ENCODE measurements at regions of chr17 and their contacts with region 1.

Region 1: DNA sequence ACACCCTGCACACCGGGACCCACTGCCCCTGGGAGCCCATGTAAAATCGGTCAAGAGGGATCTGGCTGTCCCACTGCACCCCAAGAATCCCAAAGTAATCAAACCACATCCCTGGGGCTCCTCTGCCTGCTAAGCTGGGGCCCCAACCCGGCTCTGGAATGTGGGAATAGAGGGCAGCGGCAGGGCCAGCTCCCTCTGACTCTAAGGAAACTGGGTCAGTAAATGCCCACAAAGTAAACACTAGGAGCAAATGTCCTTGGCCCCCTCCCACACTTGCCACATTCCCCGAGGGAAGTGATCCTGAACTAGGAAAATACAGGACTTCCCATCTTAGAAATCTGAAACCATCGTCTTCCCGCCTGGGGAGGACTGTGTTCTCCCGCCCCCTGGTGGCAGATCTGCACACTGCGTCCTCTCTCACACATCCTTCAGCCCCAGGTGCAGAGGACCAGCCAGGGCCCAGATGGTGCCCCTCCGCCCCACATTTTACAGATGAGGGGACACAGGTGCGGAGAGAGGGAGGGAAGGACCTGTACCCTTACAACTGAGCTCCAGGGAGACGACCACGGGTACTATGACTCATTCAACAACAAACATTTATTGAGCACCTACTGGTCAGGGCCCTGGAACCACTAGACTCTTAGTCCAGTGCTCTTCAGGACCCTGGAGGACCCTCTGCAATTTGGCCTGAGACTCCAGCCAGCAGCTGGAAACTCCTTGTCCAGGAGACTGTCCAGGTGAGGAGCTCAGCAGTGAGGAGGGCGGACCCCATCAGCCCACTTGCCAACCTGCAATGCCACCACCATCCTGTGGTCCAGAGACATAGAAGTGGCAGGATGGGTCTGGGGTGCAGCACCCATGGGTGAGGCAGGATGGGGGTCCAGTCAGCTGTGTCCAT is 10.1 kb downstream of the P3H4 start:
- DNase-seq: peak; percentile 87
- CTCF ChIP-seq: peak; percentile 94

Region 2: DNA sequence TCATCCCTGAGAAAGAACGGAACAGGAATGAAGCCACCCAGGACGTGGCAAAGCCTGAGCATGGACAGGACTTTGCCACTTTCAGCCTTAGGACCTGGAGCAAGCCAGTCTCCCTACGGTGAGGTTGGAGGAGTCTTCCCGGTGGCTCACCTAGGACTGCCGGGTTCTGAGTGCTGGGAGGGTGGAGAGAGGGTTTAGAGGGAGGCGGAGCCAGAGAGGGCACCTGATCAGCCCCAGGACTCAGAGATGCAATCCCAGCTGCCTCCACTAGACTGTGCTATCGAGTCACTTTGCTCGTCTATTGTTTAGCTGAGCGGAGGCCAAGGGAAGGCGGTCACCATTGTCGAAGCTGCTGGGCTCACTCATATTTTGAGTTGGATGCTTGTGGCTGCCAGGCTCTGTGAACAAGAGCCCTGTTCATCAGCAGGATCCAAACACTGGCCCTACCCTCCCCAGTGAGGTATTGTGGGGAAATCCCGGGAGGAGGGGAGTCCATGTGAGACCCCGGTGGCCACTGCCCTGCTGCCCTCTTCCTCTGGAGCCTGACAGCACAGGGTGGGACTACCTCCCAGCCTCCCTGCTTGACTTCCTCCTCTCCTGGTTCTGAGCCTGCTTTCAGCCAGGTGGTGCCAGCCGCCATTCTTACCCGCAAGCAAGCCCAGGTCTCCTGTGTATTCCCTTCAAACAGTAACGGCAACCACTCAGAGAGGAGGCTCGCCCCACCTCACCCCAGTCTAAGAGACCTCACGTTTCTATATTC is 222.0 kb before region 1 on chr17:
- CTCF ChIA-PET with region 1: no interaction called
- POLR2A ChIA-PET with region 1: no interaction called
- DNase-seq: peak; percentile 87
- CTCF ChIP-seq: peak; percentile 48

Region 3: GRCh38 chr17:41738077-41738735 is 63.4 kb before region 1 on chr17:
- CTCF ChIA-PET with region 1: interaction called, 53 read pairs
- POLR2A ChIA-PET with region 1: no interaction called
- DNase-seq: peak; percentile 93
- CTCF ChIP-seq: peak; percentile 99

Region 4: GRCh38 chr17:41786227-41787020 is 15.2 kb before region 1 on chr17 and contains the start of gene JUP:
- CTCF ChIA-PET with region 1: interaction called, 42 read pairs
- POLR2A ChIA-PET with region 1: no interaction called
- DNase-seq: peak; percentile 95
- CTCF ChIP-seq: peak; percentile 46

Region 5: GRCh38 chr17:41811549-41812380 is 10.1 kb after region 1 on chr17 and contains the start of gene P3H4:
- CTCF ChIA-PET with region 1: interaction called, 21 read pairs
- POLR2A ChIA-PET with region 1: no interaction called
- DNase-seq: peak; percentile 85
- CTCF ChIP-seq: peak; percentile 76

Region 6: DNA sequence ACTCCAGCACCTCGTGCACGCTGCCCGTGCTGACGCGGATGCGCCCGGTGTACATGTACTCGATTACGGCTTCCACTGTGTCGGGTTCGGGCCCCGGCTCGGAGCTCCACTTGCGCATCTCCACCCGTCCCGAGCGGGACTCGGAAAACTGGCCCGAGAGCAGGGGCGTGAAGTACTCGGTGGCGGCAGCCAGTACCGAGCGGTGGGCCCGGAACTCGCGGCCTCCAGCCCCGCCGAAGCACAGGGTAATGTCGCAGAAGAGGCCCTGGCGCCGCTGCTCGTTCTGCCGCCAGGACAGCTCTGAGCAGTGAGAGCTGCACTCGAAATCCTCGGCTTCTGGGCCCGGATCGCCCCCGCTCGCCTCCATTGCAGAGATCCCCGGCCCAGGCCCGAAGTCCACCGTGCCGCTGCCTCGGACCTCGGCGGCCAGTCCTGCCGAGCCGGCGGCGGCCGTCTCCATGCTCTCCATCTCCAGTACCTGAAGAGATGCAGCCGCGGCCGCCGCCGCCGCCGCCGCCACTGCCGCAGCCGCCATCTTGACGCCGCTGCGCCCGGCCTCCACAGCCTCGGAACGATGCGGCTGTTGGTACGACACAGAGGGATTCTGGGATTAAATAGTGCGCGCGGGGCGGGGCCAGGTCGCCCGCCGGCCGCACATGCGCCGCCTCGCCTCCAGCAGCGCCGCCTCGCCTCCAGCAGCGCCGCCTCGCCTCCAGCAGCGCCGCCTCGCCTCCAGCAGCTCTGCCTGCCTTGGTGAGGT is 63.4 kb after region 1 on chr17 and contains the start of gene KLHL11:
- CTCF ChIA-PET with region 1: no interaction called
- POLR2A ChIA-PET with region 1: no interaction called
- DNase-seq: peak; percentile 94
- CTCF ChIP-seq: no peak

Region 7: DNA sequence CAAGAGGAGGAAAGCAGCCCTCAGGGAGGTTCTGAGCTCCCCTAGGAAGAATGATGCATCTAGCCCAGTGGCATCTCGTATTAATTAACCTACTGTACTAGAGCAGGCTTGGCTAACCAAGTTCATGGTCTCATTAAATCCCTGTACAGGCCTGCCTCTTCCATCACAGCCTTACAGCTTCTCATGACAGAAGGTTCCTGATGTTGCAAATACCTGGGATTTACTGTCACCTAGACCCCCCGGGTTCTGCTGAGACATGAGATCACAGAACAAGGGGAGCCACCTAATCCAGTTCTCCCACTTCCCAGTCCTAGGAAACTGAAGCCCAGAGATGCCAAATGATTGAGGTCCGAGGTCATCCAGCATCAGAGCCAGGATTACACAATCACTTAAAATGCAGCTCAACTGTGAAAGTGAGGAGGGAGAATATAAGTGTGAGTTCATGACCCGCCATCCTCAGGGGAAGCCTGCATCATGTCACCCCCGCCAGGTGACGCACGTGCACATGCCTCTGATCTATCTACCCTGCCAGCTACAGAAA is 93.2 kb after region 1 on chr17:
- CTCF ChIA-PET with region 1: no interaction called
- POLR2A ChIA-PET with region 1: no interaction called
- DNase-seq: no peak
- CTCF ChIP-seq: no peak